WTC11 (cell line): ENCODE measurements at regions of chr2 and their contacts with region 1.

Region 1: DNA sequence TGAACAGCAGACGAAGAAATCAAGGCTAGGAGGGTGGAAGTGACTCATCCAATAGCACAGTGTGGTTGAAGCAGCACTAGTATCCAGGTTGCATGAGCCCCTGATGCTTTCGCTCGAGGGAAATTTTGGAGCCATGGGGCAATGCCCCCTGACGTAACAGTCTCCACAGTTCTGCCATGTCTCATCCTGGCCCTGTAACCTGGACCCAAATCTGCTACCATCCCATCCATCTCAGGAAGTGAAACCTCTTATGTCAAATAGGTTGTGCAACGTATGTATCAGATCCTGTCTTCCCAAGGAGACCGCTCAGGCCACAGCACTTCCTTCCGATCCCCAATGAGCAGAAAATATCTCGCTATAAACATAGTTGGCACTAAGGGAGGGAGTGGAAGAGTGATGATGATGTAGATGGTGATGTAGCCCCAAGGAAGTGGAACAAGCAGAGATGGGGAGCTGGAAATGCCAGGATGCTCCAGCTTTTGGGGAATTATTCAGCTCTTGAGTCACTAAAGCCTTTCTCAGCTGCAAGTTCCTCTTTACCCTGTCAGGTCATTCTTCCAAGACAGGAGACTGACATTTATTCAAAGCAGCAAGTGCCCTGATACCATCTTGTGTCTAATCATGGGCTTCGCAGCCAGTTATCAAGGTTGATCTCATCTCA is 3.0 kb upstream of the IL1B start:
- DNase-seq: no peak
- ATAC-seq: no peak
- H3K4me3 Mint-ChIP-seq: no peak overlapping the region
- H3K27ac Mint-ChIP-seq: no peak overlapping the region
- H3K4me1 Mint-ChIP-seq: peaks cover 22% of the 10 kb centered on the region
- H3K27me3 Mint-ChIP-seq: peaks cover 17% of the 10 kb centered on the region
- CTCF ChIP-seq: no peak

Region 2: DNA sequence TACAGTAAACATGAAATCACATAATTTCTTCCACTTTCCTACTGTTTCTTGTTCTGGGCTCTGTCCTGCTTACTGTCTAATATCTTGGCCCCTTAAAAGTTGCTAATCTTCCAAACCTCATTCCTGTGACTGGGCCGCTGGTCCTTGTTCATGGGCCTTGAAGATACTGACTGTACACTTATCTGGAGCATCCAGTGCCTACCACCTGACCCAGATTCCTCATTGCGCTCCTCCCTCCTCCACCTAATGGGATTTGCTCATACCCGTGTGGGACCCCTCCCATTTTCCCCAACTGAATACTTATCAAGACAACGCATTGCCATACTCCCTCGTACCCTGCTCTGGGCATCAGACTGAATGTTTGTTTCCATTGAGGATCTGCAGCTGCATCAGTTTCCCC is 65.3 kb after region 1 on chr2:
- CTCF ChIA-PET with region 1: no interaction called
- POLR2A ChIA-PET with region 1: interaction called, 11 read pairs
- DNase-seq: no peak
- ATAC-seq: no peak
- H3K4me3 Mint-ChIP-seq: no peak overlapping the region
- H3K27ac Mint-ChIP-seq: no peak overlapping the region
- H3K4me1 Mint-ChIP-seq: no peaks in the 10 kb centered on the region
- H3K27me3 Mint-ChIP-seq: peaks cover 19% of the 10 kb centered on the region
- CTCF ChIP-seq: no peak